PC-9 (cell line): ENCODE measurements at regions of chr12 and their contacts with region 1.

Region 1: DNA sequence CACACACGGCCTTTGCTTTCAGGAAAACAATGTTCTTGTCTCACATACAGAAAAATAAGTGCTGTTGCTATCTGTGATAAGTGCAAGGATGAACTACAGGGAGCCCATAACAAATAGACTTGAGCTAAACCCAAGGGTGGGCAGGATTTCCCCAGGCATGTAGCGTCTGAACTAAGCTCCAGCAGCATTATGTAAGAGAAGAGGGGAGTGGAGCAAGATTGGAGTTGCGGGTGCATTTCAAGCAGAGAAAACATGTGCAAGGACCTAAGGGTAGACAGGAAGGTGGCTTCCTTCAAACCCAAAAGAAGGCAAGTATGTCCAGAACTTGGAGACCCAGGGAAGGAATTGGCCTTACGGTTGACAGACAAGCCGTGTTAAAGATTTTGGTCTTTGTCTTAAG is 72.3 kb upstream of the PLEKHG7 start:
- DNase-seq: no peak
- H3K4me3 ChIP-seq: no peak overlapping the region
- H3K27ac ChIP-seq: no peak overlapping the region
- H3K4me1 ChIP-seq: no peaks in the 10 kb centered on the region
- H3K27me3 ChIP-seq: no peaks in the 10 kb centered on the region
- CTCF ChIP-seq: no peak

Region 2: GRCh38 chr12:91078501-91078900 is 1552.0 kb before region 1 on chr12:
- CTCF ChIA-PET with region 1: interaction called, 10 read pairs
- POLR2A ChIA-PET with region 1: no interaction called
- intact Hi-C with region 1: no loop called
- DNase-seq: no peak
- H3K4me3 ChIP-seq: no peak overlapping the region
- H3K27ac ChIP-seq: no peak overlapping the region
- H3K4me1 ChIP-seq: peaks cover 10% of the 10 kb centered on the region; the same call in 1 of the 2 replicates
- H3K27me3 ChIP-seq: no peaks in the 10 kb centered on the region
- CTCF ChIP-seq: no peak

Region 3: DNA sequence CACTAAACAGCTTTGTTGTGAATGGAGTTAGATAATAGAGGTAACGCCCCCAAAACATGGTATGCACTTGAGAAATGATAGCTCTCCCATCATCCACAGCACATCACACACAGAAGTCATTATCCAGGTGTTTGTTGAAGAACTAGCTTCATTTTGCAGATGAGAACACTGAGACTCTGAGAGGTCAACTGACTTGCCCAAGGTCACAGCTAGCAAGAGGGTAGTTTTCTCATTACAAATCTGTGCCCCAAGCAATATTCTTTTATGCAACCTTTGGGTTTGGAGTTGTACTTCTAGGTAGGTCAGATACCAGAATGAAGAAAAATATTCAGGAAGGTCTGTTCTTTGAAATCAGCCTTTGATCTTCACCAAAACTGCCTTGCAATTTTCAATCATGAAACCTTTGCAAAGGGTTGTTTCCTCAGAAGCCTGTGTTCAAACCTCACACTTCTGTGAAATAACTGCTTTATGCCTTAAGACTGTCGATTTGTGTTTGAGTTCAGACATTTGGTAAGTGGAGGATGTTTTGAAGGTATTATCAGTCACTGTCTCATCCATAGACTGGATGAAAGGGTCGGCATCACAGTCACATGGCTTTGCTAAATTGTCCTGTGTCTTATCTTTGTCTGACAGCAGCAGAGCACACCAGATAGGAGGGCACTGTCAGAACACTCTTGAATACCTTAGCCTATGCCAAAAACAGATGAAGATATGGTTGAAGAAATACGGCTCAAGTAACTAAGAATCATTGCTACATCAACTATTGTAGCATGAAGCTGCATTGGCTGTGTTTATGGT is 251.6 kb before region 1 on chr12:
- CTCF ChIA-PET with region 1: no interaction called
- POLR2A ChIA-PET with region 1: no interaction called
- intact Hi-C with region 1: no loop called
- DNase-seq: no peak
- H3K4me3 ChIP-seq: no peak overlapping the region
- H3K27ac ChIP-seq: no peak overlapping the region
- H3K4me1 ChIP-seq: no peaks in the 10 kb centered on the region
- H3K27me3 ChIP-seq: no peaks in the 10 kb centered on the region
- CTCF ChIP-seq: no peak